ENCODE measurements at regions of chr7 and their contacts with region 1.

Region 1: DNA sequence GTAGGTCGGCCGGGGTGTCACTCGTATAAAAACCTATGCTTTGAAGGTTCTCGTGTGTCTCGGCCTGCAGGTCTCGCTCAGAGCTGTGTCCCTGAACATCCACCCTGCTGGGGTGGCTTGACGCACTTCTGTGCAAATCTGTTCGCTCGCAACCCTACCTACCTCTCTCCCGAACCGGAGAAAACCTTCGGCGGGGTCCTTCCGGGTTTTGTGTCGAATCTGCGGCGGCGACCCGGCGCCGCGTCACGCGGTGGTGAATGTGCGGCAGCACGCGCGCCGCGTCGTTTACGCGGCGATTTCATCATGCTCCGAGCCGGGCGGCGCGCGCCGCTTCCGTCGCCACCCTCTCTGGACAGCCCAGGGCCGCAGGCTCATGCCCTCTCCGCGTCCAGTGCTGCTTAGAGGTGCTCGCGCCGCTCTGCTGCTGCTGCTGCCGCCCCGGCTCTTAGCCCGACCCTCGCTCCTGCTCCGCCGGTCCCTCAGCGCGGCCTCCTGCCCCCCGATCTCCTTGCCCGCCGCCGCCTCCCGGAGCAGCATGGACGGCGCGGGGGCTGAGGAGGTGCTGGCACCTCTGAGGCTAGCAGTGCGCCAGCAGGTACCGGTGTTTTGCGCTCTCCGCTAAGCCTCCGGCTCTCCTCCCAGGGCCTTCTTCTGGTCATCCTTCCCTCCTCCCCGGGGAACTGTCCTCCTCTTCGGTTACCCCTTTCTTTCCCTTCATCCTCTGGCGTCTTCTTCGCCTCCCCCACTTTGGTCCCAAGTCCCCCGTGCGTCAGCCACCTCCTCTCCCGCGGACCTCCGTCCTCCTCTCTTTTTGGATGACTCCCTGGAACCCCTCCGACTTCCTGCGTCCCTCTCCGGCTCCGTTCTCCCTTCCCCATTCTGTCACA is at the start of gene GARS1:
- DNase-seq: peak; percentile 89 to 91 (median 90)
- H3K4me3 ChIP-seq: peak within 1 kb of the TSS; percentile 97
- H3K4me3 Mint-ChIP-seq: peak within 1 kb of the TSS; percentile 95 to 100 (median 98)
- H3K27ac ChIP-seq: peak within 1 kb of the TSS; percentile 97
- H3K27ac Mint-ChIP-seq: peak within 1 kb of the TSS; percentile 98 to 100 (median 99)
- H3K4me1 ChIP-seq: peaks cover 48% of the 10 kb centered on the region
- H3K4me1 Mint-ChIP-seq: peaks cover 42 to 77% (median 58%) of the 10 kb centered on the region in 4 donors
- H3K27me3 ChIP-seq: no peaks in the 10 kb centered on the region
- H3K27me3 Mint-ChIP-seq: no peaks in the 10 kb centered on the region
- total RNA-seq, gene GARS1: 79.8 to 101 TPM

Region 2: DNA sequence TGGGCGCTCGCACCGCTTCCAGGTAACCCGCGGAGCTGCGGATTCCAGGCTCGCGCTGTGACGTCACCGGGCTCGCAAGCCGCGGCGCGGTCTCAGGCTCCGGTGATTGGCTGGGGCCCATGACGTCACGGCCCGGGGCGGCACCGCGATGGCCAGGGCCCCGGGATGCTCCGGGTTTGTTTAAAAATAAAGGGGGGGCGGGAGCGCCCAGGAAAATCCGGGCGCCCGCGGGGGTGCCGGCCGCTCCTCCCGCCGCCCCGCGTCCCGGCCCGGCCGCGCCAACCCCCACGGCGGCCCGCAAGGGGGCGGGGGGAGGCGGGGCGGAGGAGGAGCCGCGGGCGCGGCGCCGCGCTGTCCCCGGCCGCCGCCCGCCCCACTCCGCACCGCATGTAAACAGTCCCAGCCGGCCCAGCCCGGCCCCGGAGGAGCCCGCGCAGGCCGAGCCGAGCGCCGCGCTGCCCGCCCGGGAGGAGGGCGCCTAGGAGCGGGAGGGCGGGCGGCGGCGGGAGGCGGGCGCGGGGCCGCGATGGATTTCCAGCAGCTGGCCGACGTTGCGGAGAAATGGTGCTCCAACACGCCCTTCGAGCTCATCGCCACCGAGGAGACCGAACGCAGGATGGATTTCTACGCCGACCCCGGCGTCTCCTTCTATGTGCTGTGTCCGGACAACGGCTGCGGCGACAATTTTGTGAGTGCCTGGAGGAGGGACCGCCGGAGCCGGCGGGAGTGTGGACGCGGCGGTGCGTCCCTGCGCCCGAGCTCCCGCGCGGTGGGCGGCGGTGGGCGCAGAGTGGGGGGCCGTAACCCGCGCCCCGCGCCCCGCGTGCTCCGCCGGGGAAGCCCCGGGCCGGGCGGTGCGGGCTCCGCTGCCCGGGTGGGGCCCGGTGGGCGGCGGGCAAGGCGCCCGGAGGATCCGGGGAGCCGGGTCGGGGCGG is 459.9 kb before region 1 on chr7 and contains the start of gene MTURN:
- CTCF ChIA-PET with region 1: no interaction called
- POLR2A ChIA-PET with region 1: interaction called, 4 read pairs
- intact Hi-C with region 1: loop called (anchors 10 kb)
- DNase-seq: peak; percentile 86 to 92 (median 89)
- H3K4me3 ChIP-seq: peak within 1 kb of the TSS; percentile 66 to 69
- H3K4me3 Mint-ChIP-seq: peak within 1 kb of the TSS; percentile 87 to 96 (median 94)
- H3K27ac ChIP-seq: peak within 1 kb of the TSS; percentile 17
- H3K27ac Mint-ChIP-seq: peak within 1 kb of the TSS; percentile 75 to 95 (median 95)
- H3K4me1 ChIP-seq: peaks cover 14% of the 10 kb centered on the region
- H3K4me1 Mint-ChIP-seq: peaks cover 5 to 23% (median 12%) of the 10 kb centered on the region in 4 donors
- H3K27me3 ChIP-seq: no peaks in the 10 kb centered on the region
- H3K27me3 Mint-ChIP-seq: no peaks in the 10 kb centered on the region
- total RNA-seq, gene MTURN: 18.1 to 19.2 TPM

Region 3: DNA sequence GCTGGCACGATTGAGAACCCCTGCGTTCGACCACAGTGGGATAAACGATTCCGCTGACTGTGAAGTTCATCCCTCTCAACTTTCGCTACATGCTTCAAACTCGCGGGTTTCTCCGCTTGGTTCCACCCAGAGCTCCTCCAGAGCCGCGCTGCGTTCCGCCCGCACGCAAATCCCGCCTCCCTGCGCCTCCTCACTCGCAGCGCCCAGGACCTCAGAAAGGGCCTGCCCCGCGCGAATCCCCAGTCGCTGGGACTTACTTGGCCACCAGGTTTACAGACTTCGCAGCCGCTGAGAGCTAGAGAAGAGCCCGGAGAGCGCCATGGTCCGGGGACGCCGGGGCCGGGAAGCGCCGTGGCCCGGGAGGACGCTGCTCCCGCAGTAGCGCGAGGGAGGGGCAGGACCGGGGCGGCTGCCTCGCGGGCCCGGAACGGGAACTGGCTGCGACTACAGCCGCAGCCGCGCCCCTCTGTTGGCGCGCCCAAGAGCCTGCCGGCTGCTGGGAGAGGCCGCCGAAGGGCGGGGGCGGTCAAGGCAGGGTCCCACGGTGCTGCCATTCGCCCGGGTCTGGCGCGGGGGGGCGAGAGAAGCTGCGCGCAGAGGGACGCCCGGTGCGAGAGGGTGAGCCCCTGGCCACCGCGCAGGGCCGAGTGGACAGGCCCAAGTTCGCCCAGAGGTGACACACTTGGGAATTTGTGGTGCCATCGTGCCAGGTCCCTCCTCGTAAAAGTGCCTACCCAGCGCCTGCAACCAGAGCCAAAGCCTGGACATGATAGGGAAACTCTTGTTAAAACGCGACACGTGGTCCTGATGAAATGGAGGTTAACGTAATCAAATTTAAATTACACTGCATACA is 116.2 kb before region 1 on chr7 and contains the start of gene NOD1:
- CTCF ChIA-PET with region 1: no interaction called
- POLR2A ChIA-PET with region 1: interaction called, 13 read pairs
- intact Hi-C with region 1: loop called (anchors 2 kb)
- DNase-seq: peak; percentile 54 to 72 (median 67)
- H3K4me3 ChIP-seq: peak within 1 kb of the TSS; percentile 70 to 98
- H3K4me3 Mint-ChIP-seq: peak within 1 kb of the TSS in 7 of 8 donors; percentile 94 to 98 (median 95)
- H3K27ac ChIP-seq: peak within 1 kb of the TSS; percentile 79
- H3K27ac Mint-ChIP-seq: peak within 1 kb of the TSS in 6 of 7 donors; percentile 77 to 96 (median 90)
- H3K4me1 ChIP-seq: peaks cover 44% of the 10 kb centered on the region
- H3K4me1 Mint-ChIP-seq: peaks cover 36 to 59% (median 41%) of the 10 kb centered on the region in 4 donors
- H3K27me3 ChIP-seq: no peaks in the 10 kb centered on the region
- H3K27me3 Mint-ChIP-seq: no peaks in the 10 kb centered on the region
- total RNA-seq, gene NOD1: 20.7 to 21.3 TPM

Region 4: DNA sequence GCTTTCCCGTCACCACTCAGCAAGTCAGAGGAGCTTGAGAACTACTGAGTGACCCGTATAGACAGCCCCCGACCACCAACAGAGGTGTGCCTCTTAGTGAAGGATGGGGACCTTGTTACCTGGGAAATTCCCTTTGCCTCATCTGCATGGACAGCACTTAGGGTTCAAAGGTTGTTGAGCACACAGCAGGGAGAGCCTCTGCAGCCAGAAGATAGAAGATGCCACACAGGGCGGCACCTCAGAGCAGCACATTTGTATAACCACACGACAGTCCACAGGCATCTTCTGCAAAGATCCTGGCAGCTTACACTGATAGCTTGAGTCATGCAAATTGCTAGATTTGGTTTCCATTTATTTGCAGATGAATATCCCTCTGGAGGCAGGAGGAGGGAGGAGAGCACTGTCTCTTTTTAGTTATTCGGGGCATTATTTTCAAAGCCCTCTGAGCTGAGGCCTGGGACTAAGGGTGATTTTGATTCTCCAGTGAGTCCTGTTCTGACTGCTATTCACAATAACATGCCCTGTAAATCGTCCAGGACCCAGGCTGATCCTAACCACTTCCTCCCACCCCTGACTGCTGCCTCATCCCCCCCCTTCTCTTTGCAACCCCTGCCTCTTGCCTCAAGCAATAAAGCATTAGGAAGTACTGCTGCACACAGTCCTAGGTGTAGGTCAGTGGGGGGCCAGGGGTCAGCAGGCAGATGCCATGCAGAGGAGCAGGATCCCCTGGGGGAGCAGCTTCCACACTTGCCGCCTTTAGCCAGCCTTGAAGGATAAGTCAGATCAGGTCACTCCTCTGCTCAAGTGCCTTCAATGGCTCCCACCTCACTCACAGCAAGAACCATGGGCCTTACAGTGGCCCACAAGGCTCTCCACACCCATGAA is 132.5 kb after region 1 on chr7:
- CTCF ChIA-PET with region 1: interaction called, 3 read pairs
- POLR2A ChIA-PET with region 1: interaction called, 6 read pairs
- intact Hi-C with region 1: loop called (anchors 1 kb)
- DNase-seq: peak; percentile 77 to 82 (median 81)
- H3K4me3 ChIP-seq: peak overlapping the region; percentile 47 to 70
- H3K4me3 Mint-ChIP-seq: peak overlapping the region; percentile 87 to 96 (median 92)
- H3K27ac ChIP-seq: peak overlapping the region; percentile 57
- H3K27ac Mint-ChIP-seq: peak overlapping the region; percentile 85 to 96 (median 94)
- H3K4me1 ChIP-seq: peaks cover 60% of the 10 kb centered on the region
- H3K4me1 Mint-ChIP-seq: peaks cover 38 to 66% (median 50%) of the 10 kb centered on the region in 4 donors
- H3K27me3 ChIP-seq: no peaks in the 10 kb centered on the region
- H3K27me3 Mint-ChIP-seq: no peaks in the 10 kb centered on the region